ENCODE measurements at regions of chr6 and their contacts with region 1.

Region 1: DNA sequence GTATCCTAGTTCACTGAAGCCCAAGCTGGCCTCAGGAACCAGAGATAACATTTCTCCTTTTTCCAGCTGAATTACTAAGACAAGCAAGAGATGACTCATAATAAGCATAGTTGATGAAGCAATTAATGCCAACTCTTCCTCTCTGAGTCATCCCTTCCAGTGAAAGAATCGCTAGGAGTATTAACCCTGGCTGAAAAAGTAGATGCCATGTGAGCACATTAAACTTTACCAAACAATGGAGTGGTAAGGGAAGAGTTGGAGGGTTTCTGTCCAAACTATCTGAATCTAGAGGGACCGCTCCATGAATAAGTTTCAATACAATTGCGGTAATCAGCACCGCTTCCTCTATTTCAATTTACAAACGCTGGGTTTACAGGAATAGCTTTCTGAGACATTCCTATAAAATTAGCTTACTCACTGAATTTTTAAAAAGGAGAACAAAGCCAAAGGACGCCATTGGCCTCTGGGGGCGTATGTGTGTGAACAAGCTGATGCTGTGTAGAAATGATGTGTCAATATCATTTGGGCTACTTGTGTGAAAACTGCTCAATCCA is 48.3 kb downstream of the ATXN1 start:
- DNase-seq: no peak
- ATAC-seq: peak; percentile 54
- H3K4me3 Mint-ChIP-seq: peak overlapping the region; percentile 75
- H3K27ac Mint-ChIP-seq: peak overlapping the region; percentile 94
- H3K4me1 Mint-ChIP-seq: peaks cover 28% of the 10 kb centered on the region
- H3K27me3 Mint-ChIP-seq: no peaks in the 10 kb centered on the region
- CTCF ChIP-seq: no peak

Region 2: GRCh38 chr6:16319813-16320532 is 393.0 kb before region 1 on chr6:
- CTCF ChIA-PET with region 1: no interaction called
- POLR2A ChIA-PET with region 1: no interaction called
- intact Hi-C with region 1: loop called (anchors 2 kb)
- DNase-seq: no peak
- ATAC-seq: peak; percentile 67
- H3K4me3 Mint-ChIP-seq: peak overlapping the region; percentile 9
- H3K27ac Mint-ChIP-seq: peak overlapping the region; percentile 13
- H3K4me1 Mint-ChIP-seq: peaks cover 44% of the 10 kb centered on the region
- H3K27me3 Mint-ChIP-seq: no peaks in the 10 kb centered on the region
- CTCF ChIP-seq: no peak

Region 3: GRCh38 chr6:16420715-16421461 is 292.1 kb before region 1 on chr6:
- CTCF ChIA-PET with region 1: no interaction called
- POLR2A ChIA-PET with region 1: no interaction called
- intact Hi-C with region 1: loop called (anchors 2 kb)
- DNase-seq: peak; percentile 27
- ATAC-seq: peak; percentile 66
- H3K4me3 Mint-ChIP-seq: peak overlapping the region; percentile 62
- H3K27ac Mint-ChIP-seq: peak overlapping the region; percentile 98
- H3K4me1 Mint-ChIP-seq: peaks cover 47% of the 10 kb centered on the region
- H3K27me3 Mint-ChIP-seq: no peaks in the 10 kb centered on the region
- CTCF ChIP-seq: no peak

Region 4: GRCh38 chr6:16657768-16658167 is 55.2 kb before region 1 on chr6:
- CTCF ChIA-PET with region 1: no interaction called
- POLR2A ChIA-PET with region 1: interaction called, 3 read pairs
- intact Hi-C with region 1: loop called (anchors 2 kb)
- DNase-seq: no peak
- ATAC-seq: peak; percentile 57
- H3K4me3 Mint-ChIP-seq: peak overlapping the region; percentile 45
- H3K27ac Mint-ChIP-seq: no peak overlapping the region
- H3K4me1 Mint-ChIP-seq: peaks cover 36% of the 10 kb centered on the region
- H3K27me3 Mint-ChIP-seq: no peaks in the 10 kb centered on the region
- CTCF ChIP-seq: no peak

Region 5: GRCh38 chr6:16690608-16691198 is 22.3 kb before region 1 on chr6:
- CTCF ChIA-PET with region 1: interaction called, 3 read pairs
- POLR2A ChIA-PET with region 1: interaction called, 10 read pairs
- intact Hi-C with region 1: no loop called
- DNase-seq: no peak
- ATAC-seq: peak; percentile 79
- H3K4me3 Mint-ChIP-seq: peak overlapping the region; percentile 15
- H3K27ac Mint-ChIP-seq: peak overlapping the region; percentile 78
- H3K4me1 Mint-ChIP-seq: peaks cover 60% of the 10 kb centered on the region
- H3K27me3 Mint-ChIP-seq: no peaks in the 10 kb centered on the region
- CTCF ChIP-seq: no peak

Measured in activated B cell treated with CpG ODN at 0.5 μM for 24 hours (primary cell).